ENCODE measurements at regions of chr16 and their contacts with region 1.

Region 1: DNA sequence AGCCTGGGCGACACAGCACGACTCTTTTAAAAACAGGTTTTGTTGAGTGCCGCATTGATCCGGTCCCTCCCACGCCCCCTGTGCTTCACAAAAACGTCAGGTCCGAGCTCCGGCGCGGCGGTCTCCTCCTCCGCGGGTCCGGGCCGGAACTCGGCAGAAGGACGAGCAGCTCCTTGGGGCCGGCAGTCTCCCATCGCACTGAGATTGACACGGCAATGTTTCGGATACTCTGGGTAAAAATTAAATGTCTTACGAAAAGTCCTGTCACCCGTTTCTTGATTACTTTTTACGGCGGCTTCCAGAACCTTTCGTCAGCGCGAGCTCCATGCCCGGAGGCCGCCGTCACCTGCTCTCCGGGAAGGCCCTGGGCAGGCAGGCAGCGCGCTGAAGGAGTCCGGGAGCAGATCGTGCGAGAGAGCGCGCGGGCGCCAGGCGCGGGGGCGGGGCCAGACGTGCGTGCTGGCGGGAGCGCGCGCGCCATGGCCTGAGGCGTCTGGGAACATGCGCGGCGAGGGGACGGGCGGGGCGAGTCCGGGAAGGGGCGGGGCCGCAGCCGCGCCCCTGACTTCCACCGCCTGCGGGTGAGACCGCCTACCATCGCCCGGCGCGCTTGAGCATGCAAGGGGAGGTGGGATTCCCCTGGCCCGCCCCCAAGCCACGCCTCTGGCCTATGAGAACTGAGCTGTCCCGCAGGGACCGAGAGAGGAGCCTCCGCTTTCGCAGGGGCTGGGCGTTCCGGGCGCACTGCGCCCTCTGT is 11.7 kb upstream of the SRL start:
- DNase-seq: peak; percentile 100
- ATAC-seq: peak; percentile 97
- H3K4me3 Mint-ChIP-seq: peak overlapping the region; percentile 87
- H3K27ac Mint-ChIP-seq: peak overlapping the region; percentile 96
- H3K4me1 Mint-ChIP-seq: peaks cover 8% of the 10 kb centered on the region; the same call in 1 of the 2 replicates
- H3K27me3 Mint-ChIP-seq: no peaks in the 10 kb centered on the region
- CTCF ChIP-seq: no peak

Region 2: GRCh38 chr16:3983081-3983520 is 270.5 kb before region 1 on chr16:
- CTCF ChIA-PET with region 1: interaction called, 56 read pairs
- POLR2A ChIA-PET with region 1: no interaction called
- DNase-seq: peak; percentile 89
- ATAC-seq: peak; percentile 97
- H3K4me3 Mint-ChIP-seq: no peak overlapping the region
- H3K27ac Mint-ChIP-seq: no peak overlapping the region
- H3K4me1 Mint-ChIP-seq: peaks cover 8% of the 10 kb centered on the region
- H3K27me3 Mint-ChIP-seq: peaks cover 9% of the 10 kb centered on the region
- CTCF ChIP-seq: peak; percentile 38; the same call in 1 of the 2 replicates

Region 3: DNA sequence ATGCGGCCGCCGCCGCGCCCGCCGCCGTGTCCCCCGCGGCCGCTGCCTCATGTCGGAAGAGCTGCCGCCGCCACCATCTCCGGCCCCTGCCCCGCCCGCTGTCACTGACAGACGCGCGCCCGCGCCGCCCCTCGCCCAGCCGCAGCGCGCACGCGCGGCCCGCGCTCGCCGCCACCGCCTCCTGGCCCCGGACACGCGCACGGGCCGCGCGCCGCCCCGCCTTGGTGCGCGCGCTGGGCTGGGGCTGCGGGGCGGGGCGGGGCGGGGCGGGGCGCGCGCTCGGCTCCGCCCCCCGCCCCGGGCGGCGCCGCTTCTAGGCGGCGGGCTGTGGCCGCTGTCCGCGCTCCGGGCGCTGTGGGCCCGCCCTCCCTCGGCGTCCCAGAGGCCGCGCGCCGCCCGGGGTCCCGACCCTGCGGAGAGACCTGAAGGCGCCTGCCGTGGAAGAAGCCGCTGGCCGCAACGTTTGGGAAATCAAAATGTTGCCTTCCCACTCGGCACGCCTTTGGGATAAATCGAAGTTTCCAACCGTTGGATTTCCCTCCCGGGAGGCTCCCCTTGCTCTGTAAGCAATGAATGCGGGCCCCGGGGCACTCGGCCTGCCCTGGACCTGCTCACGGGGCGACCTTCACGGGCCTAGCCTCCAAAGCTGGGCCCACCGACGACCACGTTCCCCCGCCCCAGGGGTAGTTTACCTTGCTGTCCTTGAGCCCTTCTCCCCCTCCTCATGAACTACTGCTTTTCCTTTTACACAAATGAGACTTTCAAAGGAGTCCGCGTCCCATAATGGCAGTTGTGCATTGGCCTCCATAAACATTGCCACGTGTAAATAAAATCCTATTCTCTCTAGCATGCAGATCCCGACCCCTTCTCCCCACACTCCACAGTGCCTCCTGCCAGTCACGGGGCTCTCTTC is 137.0 kb before region 1 on chr16 and contains the start of gene ADCY9:
- CTCF ChIA-PET with region 1: interaction called, 32 read pairs
- POLR2A ChIA-PET with region 1: interaction called, 9 read pairs
- DNase-seq: peak; percentile 83
- ATAC-seq: peak; percentile 56
- H3K4me3 Mint-ChIP-seq: peak within 1 kb of the TSS; percentile 79
- H3K27ac Mint-ChIP-seq: no peak within 1 kb of the TSS; the same call in 1 of the 2 replicates
- H3K4me1 Mint-ChIP-seq: peaks cover 37% of the 10 kb centered on the region
- H3K27me3 Mint-ChIP-seq: peaks cover 32% of the 10 kb centered on the region
- CTCF ChIP-seq: no peak
- total RNA-seq, gene ADCY9: 9.5 to 11.5 TPM (median 10.0 TPM) in 3 replicates

Region 4: GRCh38 chr16:4217204-4218131 is 36.1 kb before region 1 on chr16:
- CTCF ChIA-PET with region 1: interaction called, 37 read pairs
- POLR2A ChIA-PET with region 1: interaction called, 9 read pairs
- DNase-seq: no peak
- ATAC-seq: peak; percentile 46
- H3K4me3 Mint-ChIP-seq: no peak overlapping the region
- H3K27ac Mint-ChIP-seq: no peak overlapping the region
- H3K4me1 Mint-ChIP-seq: peaks cover 27% of the 10 kb centered on the region
- H3K27me3 Mint-ChIP-seq: no peaks in the 10 kb centered on the region; the same call in 1 of the 2 replicates
- CTCF ChIP-seq: no peak

Region 5: DNA sequence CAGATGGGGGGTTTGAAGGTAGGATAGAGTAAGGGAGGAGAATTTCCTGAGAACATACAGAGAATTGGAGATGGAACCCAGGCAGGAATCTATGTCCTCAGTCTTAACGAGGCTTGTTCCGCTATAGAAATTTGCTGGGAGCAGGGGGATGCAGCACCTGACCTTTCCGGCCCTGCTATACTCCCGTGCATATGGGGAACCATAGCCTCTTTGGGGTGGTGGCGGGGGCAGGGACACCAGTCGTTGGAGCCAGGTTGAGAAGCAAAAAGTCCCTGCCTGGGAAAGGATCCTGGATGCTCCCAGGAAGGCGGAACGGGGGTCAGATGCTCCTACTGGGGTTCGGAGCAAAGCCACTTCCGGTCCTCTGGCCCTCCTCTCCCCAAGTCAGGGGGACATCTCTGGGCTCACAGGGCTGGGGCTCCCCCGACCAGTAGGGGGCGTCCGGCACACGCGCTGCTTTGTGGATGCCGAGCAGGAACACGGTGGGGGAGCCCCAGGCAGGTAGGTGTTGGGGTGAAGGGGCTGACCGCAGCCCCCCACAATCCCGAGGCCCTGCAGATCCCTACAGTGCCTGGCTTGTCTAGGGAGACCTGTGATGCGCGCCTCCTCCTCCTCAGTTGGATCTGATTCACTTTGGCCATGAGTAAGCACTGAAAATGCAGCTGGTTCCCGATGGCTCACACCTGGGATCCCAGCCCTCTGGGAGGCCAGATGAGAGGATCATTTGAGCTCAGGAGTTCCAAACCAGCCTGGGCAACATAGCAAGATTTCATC is 34.8 kb after region 1 on chr16:
- CTCF ChIA-PET with region 1: interaction called, 14 read pairs
- POLR2A ChIA-PET with region 1: no interaction called
- DNase-seq: peak; percentile 95
- ATAC-seq: peak; percentile 92
- H3K4me3 Mint-ChIP-seq: no peak overlapping the region
- H3K27ac Mint-ChIP-seq: peak overlapping the region; percentile 76
- H3K4me1 Mint-ChIP-seq: peaks cover 35% of the 10 kb centered on the region
- H3K27me3 Mint-ChIP-seq: no peaks in the 10 kb centered on the region; the same call in 1 of the 2 replicates
- CTCF ChIP-seq: peak; percentile 95

Region 6: DNA sequence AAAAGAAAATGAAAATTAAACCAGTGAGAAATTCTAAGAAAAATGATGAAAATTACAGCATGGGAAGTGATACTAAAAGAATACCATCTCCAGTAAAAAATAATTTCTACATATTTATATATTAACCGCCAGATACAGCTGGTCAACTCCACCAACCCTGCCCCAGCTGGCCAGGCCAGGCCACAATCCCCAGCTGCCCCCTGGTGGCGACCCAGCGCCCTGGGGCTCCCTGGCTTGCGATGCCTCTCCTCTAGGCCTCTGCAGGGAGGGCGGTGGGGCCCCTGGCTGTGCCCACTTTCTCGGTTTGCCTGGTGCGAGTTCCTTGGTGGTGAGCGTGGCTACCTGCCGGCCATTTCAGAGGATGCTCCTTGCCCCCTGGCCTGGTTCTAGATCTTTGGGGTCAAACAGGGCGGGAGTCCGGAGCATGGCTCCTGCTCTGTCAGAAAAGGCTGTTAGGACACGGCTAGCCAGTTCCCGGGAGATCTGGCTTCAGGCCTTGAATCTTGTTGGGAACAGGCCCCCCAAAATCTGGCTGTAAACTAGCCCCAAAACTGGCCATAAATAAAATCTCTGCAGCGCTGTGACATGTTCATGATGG is 76.8 kb after region 1 on chr16:
- CTCF ChIA-PET with region 1: interaction called, 48 read pairs
- POLR2A ChIA-PET with region 1: interaction called, 7 read pairs
- DNase-seq: peak; percentile 86
- ATAC-seq: peak; percentile 27
- H3K4me3 Mint-ChIP-seq: no peak overlapping the region
- H3K27ac Mint-ChIP-seq: no peak overlapping the region
- H3K4me1 Mint-ChIP-seq: peaks cover 18% of the 10 kb centered on the region
- H3K27me3 Mint-ChIP-seq: no peaks in the 10 kb centered on the region
- CTCF ChIP-seq: peak; percentile 93

Region 7: GRCh38 chr16:4392382-4393239 is 139.0 kb after region 1 on chr16:
- CTCF ChIA-PET with region 1: interaction called, 26 read pairs
- POLR2A ChIA-PET with region 1: no interaction called
- DNase-seq: peak; percentile 81
- ATAC-seq: peak; percentile 76
- H3K4me3 Mint-ChIP-seq: peak overlapping the region; percentile 20; the same call in 1 of the 2 replicates
- H3K27ac Mint-ChIP-seq: peak overlapping the region; percentile 92
- H3K4me1 Mint-ChIP-seq: peaks cover 48% of the 10 kb centered on the region
- H3K27me3 Mint-ChIP-seq: no peaks in the 10 kb centered on the region
- CTCF ChIP-seq: no peak

Measured in WTC11 (cell line).